CD4-positive, alpha-beta memory T cell (primary cell): ENCODE measurements at regions of chrX and their contacts with region 1.

Region 1: DNA sequence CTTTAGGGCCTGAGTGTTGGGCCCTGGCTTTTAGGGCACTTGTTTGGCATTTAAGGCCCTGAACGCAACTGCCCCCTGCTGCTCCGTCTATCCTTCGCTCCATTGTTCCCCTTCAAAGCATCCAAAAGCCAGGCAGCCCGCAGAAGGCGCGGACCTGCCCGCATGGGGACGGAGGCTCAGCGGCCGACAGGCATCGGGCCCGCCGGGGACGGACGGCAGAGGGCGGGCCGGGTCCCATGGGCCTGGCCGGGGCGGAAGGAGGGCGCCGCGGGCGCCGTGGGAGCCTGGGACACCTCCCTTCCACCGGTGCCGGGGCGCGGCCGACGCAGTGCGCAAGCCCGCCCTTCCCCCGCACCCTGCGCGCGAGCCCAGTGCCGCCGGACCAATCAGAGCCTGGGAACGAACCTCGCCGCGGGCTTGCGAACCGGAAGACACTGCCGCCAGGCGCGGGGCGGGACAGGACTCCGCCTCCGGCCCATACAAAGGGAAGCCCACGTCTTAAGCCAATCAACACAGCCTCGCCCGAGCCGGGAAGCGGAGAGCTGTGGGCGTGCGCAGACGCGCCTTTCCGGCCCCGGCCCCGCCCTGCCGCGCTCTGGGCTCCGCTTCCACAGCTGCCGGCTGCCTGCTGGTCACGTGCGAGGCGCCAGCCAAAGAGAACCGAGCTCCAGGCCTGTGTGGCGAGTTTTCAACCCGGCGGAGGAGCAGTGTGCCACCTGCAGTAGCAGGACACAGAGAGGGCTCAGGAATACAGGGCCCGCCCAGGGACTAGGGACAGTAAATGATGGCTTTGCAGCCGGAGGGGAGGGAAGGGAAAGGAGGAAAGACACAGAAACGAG is 2.1 kb upstream of the ARHGAP4 start:
- DNase-seq: peak; percentile 95 to 99 (median 97)
- H3K4me3 ChIP-seq: peak overlapping the region; percentile 17 to 72
- H3K4me3 Mint-ChIP-seq: peak overlapping the region; percentile 89 to 95 (median 92)
- H3K27ac ChIP-seq: peak overlapping the region; percentile 98
- H3K27ac Mint-ChIP-seq: peak overlapping the region; percentile 98 to 99 (median 99)
- H3K4me1 ChIP-seq: peaks cover 19% of the 10 kb centered on the region
- H3K4me1 Mint-ChIP-seq: peaks cover 6 to 66% (median 48%) of the 10 kb centered on the region in 4 donors
- H3K27me3 ChIP-seq: no peaks in the 10 kb centered on the region
- H3K27me3 Mint-ChIP-seq: no peaks in the 10 kb centered on the region

Region 2: DNA sequence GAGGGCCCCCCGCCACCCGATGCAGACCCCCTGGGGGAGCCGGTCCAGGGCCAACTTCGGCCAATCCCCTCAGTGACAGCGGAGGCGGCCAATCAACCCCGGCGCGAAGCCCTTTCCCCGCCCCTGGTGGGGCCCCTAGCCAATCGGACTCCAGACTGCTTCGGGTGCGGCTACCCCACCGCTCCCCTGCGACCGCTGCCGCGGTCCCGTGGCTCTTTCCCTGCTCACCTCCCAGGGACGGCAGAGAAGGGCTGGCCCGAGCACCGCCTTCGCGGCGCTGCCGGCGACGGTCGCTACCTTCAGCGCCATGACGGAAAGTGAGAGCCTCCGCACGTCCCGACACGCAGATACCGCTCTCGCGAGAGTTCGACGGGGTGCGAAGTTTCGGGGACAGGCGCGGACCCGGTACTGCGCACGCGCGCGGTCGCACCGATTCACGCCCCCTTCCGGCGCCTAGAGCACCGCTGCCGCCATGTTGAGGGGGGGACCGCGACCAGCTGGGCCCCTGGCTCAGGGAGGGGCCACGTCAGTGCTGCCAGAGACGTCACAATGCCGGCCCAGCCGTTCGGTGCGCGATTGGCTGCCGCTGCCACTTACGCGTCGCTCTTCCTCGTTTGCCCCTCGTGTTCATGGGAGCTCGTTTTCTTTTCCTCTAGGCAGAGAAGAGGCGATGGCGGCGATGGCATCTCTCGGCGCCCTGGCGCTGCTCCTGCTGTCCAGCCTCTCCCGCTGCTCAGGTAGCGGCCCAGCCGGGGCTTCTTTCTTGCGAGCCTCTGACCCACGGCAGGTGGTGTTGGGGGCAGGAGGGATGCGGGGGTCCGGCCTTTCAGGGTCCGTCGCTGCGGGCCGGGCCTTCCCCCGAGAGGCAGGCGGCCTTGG is 133.9 kb before region 1 on chrX and contains the starts of genes IDH3G and SSR4:
- CTCF ChIA-PET with region 1: interaction called, 4 read pairs
- POLR2A ChIA-PET with region 1: interaction called, 54 read pairs
- intact Hi-C with region 1: loop called (anchors 1 kb)
- DNase-seq: peak; percentile 93 to 95 (median 94)
- H3K4me3 ChIP-seq: peak within 1 kb of the TSS; percentile 63 to 69
- H3K4me3 Mint-ChIP-seq: peak within 1 kb of the TSS; percentile 89 to 95 (median 92)
- H3K27ac ChIP-seq: peak within 1 kb of the TSS; percentile 85
- H3K27ac Mint-ChIP-seq: peak within 1 kb of the TSS; percentile 90 to 95 (median 92)
- H3K4me1 ChIP-seq: peaks cover 43% of the 10 kb centered on the region
- H3K4me1 Mint-ChIP-seq: peaks cover 12 to 30% (median 21%) of the 10 kb centered on the region in 4 donors
- H3K27me3 ChIP-seq: no peaks in the 10 kb centered on the region
- H3K27me3 Mint-ChIP-seq: no peaks in the 10 kb centered on the region
- total RNA-seq, gene IDH3G: 39.9 to 45.5 TPM
- total RNA-seq, gene SSR4: 216 to 224 TPM

Region 3: GRCh38 chrX:153909024-153909970 is 18.8 kb before region 1 on chrX:
- CTCF ChIA-PET with region 1: interaction called, 13 read pairs
- POLR2A ChIA-PET with region 1: interaction called, 222 read pairs
- intact Hi-C with region 1: loop called (anchors 2 kb)
- DNase-seq: no peak
- H3K4me3 ChIP-seq: no peak overlapping the region
- H3K4me3 Mint-ChIP-seq: no peak overlapping the region
- H3K27ac ChIP-seq: no peak overlapping the region
- H3K27ac Mint-ChIP-seq: no peak overlapping the region
- H3K4me1 ChIP-seq: peaks cover 16% of the 10 kb centered on the region
- H3K4me1 Mint-ChIP-seq: peaks cover 7 to 22% (median 12%) of the 10 kb centered on the region in 4 donors
- H3K27me3 ChIP-seq: no peaks in the 10 kb centered on the region
- H3K27me3 Mint-ChIP-seq: no peaks in the 10 kb centered on the region

Region 4: DNA sequence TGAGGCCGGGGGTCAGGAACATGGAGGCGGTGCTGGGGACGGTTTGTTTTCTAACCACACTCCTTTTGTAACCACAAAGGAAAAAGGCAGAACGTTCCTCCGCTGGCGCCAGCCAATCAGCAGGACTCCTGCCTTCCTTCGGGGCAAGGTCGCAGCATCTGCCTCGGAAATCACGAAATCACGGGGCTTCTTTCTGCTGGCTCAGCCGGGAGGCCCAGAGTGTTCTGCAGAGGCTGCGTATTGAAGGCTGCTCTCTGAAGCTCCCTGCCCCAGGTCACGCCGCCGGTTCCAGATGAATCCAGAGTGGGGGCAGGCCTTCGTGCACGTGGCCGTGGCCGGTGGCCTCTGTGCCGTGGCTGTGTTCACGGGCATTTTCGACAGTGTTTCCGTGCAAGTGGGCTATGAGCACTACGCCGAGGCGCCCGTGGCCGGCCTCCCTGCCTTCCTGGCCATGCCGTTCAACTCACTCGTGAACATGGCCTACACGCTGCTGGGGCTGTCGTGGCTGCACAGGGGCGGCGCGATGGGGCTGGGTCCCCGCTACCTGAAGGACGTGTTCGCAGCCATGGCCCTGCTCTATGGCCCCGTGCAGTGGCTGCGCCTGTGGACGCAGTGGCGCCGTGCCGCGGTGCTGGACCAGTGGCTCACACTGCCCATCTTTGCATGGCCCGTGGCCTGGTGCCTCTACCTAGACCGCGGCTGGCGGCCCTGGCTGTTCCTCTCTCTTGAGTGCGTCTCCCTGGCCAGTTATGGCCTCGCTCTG is 53.8 kb after region 1 on chrX:
- CTCF ChIA-PET with region 1: no interaction called
- POLR2A ChIA-PET with region 1: interaction called, 20 read pairs
- intact Hi-C with region 1: no loop called
- DNase-seq: peak; percentile 64 to 72 (median 68)
- H3K4me3 ChIP-seq: peak overlapping the region in 1 of 2 donors; percentile 19
- H3K4me3 Mint-ChIP-seq: peak overlapping the region; percentile 59 to 86 (median 74)
- H3K27ac ChIP-seq: peak overlapping the region; percentile 52
- H3K27ac Mint-ChIP-seq: peak overlapping the region; percentile 90 to 97 (median 94)
- H3K4me1 ChIP-seq: peaks cover 56% of the 10 kb centered on the region
- H3K4me1 Mint-ChIP-seq: peaks cover 22 to 67% (median 40%) of the 10 kb centered on the region in 4 donors
- H3K27me3 ChIP-seq: no peaks in the 10 kb centered on the region
- H3K27me3 Mint-ChIP-seq: no peaks in the 10 kb centered on the region